Calu3 (cell line): ENCODE measurements at regions of chr6 and their contacts with region 1.

Region 1: GRCh38 chr6:25369433-25370181 is 90.4 kb downstream of the CARMIL1 start:
- DNase-seq: peak; percentile 38
- H3K4me3 Mint-ChIP-seq: peak overlapping the region; percentile 56
- H3K27ac Mint-ChIP-seq: peak overlapping the region; percentile 60
- H3K4me1 Mint-ChIP-seq: peaks cover 83% of the 10 kb centered on the region
- H3K27me3 Mint-ChIP-seq: no peaks in the 10 kb centered on the region
- CTCF ChIP-seq: no peak

Region 2: GRCh38 chr6:25431306-25431974 is 61.8 kb after region 1 on chr6:
- CTCF ChIA-PET with region 1: no interaction called
- intact Hi-C with region 1: no loop called
- DNase-seq: no peak
- H3K4me3 Mint-ChIP-seq: no peak overlapping the region
- H3K27ac Mint-ChIP-seq: peak overlapping the region; percentile 42
- H3K4me1 Mint-ChIP-seq: peaks cover 51% of the 10 kb centered on the region
- H3K27me3 Mint-ChIP-seq: no peaks in the 10 kb centered on the region
- CTCF ChIP-seq: no peak

Region 3: DNA sequence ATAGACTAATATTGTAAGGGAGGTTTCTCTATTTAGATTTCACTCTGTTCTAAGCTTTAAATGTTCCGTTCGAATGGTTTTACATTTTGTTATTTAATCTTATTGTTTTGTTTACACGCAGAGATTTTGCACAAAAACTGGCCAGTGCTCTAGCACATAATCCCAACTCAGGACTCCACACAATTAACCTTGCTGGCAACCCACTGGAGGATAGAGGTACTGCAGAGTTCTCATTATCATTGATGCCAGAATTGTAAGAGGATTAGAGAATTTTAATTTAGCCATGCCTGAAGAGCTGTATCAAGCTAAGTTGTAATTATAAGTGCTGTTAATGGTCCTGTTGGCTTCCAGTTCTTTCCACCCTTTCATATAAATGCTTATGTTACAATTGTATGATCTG is 102.7 kb after region 1 on chr6:
- CTCF ChIA-PET with region 1: no interaction called
- intact Hi-C with region 1: loop called (anchors 5 kb)
- DNase-seq: no peak
- H3K4me3 Mint-ChIP-seq: no peak overlapping the region
- H3K27ac Mint-ChIP-seq: no peak overlapping the region
- H3K4me1 Mint-ChIP-seq: peaks cover 1% of the 10 kb centered on the region
- H3K27me3 Mint-ChIP-seq: no peaks in the 10 kb centered on the region
- CTCF ChIP-seq: peak; percentile 14